ENCODE measurements at regions of chr3 and their contacts with region 1.

Region 1: DNA sequence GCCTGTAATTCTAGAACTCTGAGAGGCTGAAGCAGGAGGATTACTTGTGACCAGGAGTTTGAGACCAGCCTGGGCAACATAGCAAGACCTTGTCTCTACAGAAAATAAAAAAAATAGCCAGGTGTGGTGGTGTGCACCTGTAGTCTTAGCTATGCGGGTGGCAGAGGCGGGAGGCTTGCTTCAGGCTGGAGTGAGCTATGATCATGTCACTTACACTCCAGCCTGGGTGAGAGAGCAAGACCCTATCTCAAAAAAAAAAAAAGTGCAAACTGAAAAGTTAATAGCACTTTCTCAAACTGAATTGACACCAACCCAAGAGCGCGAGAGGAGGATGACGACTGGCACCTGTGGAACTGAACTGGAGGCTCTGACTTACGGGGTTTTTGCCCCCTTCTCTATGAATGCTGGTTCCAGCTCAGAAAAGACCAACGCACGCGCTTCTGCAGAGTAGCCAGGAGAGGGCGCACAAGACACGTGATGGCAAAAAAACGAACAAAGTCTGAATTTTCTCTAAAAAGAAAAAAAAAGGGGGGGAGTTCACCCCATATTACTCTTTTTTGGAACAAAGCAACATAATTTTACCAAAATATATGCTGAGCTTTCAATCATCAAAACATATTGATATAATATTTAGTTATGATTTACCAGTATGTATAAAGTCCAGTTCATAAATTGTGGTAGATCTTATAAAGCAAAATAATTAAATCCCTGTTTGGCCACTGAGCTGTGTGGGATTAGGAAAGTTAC is 23.7 kb downstream of the CFAP92 start:
- DNase-seq: peak in 1 of 2 experiments; percentile 40
- H3K4me3 ChIP-seq: no peak overlapping the region
- H3K27ac ChIP-seq: no peak overlapping the region
- H3K4me1 ChIP-seq: no peaks in the 10 kb centered on the region; the same call in 1 of the 2 replicates
- H3K27me3 ChIP-seq: peaks cover 9% of the 10 kb centered on the region; the same call in 1 of the 2 replicates
- CTCF ChIP-seq: peak; percentile 96

Region 2: GRCh38 chr3:129016356-129016719 is 46.2 kb after region 1 on chr3:
- CTCF ChIA-PET with region 1: interaction called, 33 read pairs
- POLR2A ChIA-PET with region 1: interaction called, 17 read pairs
- intact Hi-C with region 1: loop called (anchors 2 kb)
- DNase-seq: peak; percentile 58 to 68
- H3K4me3 ChIP-seq: no peak overlapping the region
- H3K27ac ChIP-seq: 0 out of 2 replicates have a peak overlapping the region, but pooled peaks have one; percentile 33
- H3K4me1 ChIP-seq: peaks cover 16% of the 10 kb centered on the region
- H3K27me3 ChIP-seq: no peaks in the 10 kb centered on the region
- CTCF ChIP-seq: no peak

Region 3: DNA sequence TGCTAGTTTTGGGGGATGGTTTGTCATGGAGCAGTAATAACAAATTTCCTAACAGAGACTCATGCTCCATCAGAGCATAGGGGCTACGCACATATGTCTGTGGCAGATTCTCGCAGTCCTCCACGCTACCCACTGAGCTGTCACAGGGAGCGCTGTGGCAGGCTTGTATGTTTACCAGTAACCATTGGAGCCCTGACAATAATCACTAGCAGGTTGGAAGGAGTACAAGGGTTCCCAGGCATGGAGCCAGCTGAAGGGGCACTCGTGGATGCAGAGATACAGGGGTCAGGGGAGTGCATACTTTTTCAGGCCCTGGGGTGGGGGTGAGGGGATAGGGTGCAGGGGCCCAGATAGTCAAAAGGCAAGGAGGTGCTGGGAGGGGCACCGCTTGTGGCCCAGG is 82.5 kb after region 1 on chr3:
- CTCF ChIA-PET with region 1: interaction called, 26 read pairs
- POLR2A ChIA-PET with region 1: no interaction called
- intact Hi-C with region 1: no loop called
- DNase-seq: no peak
- H3K4me3 ChIP-seq: no peak overlapping the region
- H3K27ac ChIP-seq: no peak overlapping the region
- H3K4me1 ChIP-seq: no peaks in the 10 kb centered on the region; the same call in 1 of the 2 replicates
- H3K27me3 ChIP-seq: peaks cover 9% of the 10 kb centered on the region
- CTCF ChIP-seq: no peak

Region 4: GRCh38 chr3:129249276-129250065 is 279.3 kb after region 1 on chr3 and contains the start of gene COPG1:
- CTCF ChIA-PET with region 1: interaction called, 20 read pairs
- POLR2A ChIA-PET with region 1: no interaction called
- intact Hi-C with region 1: loop called (anchors 1 kb)
- DNase-seq: peak; percentile 73 to 92
- H3K4me3 ChIP-seq: peak within 1 kb of the TSS; percentile 88
- H3K27ac ChIP-seq: peak within 1 kb of the TSS; percentile 56
- H3K4me1 ChIP-seq: peaks cover 21% of the 10 kb centered on the region
- H3K27me3 ChIP-seq: no peaks in the 10 kb centered on the region
- CTCF ChIP-seq: no peak
- total RNA-seq, gene COPG1: 195 and 212 TPM in 2 replicates

Region 5: GRCh38 chr3:129316131-129317013 is 346.2 kb after region 1 on chr3:
- CTCF ChIA-PET with region 1: interaction called, 10 read pairs
- POLR2A ChIA-PET with region 1: no interaction called
- intact Hi-C with region 1: loop called (anchors 5 kb)
- DNase-seq: peak; percentile 53 to 90
- H3K4me3 ChIP-seq: peak overlapping the region; percentile 90
- H3K27ac ChIP-seq: peak overlapping the region; percentile 61
- H3K4me1 ChIP-seq: peaks cover 8% of the 10 kb centered on the region; the same call in 1 of the 2 replicates
- H3K27me3 ChIP-seq: no peaks in the 10 kb centered on the region
- CTCF ChIP-seq: peak; percentile 65

Region 6: GRCh38 chr3:129383292-129383860 is 413.2 kb after region 1 on chr3:
- CTCF ChIA-PET with region 1: interaction called, 12 read pairs
- POLR2A ChIA-PET with region 1: no interaction called
- intact Hi-C with region 1: no loop called
- DNase-seq: peak; percentile 49 to 66
- H3K4me3 ChIP-seq: no peak overlapping the region
- H3K27ac ChIP-seq: no peak overlapping the region
- H3K4me1 ChIP-seq: peaks cover 6% of the 10 kb centered on the region
- H3K27me3 ChIP-seq: no peaks in the 10 kb centered on the region
- CTCF ChIP-seq: peak; percentile 85

Measured in PC-9 (cell line).